Dorsolateral prefrontal cortex (tissue), 120 donors: ENCODE measurements at regions of chr6 and their contacts with region 1.

Region 1: DNA sequence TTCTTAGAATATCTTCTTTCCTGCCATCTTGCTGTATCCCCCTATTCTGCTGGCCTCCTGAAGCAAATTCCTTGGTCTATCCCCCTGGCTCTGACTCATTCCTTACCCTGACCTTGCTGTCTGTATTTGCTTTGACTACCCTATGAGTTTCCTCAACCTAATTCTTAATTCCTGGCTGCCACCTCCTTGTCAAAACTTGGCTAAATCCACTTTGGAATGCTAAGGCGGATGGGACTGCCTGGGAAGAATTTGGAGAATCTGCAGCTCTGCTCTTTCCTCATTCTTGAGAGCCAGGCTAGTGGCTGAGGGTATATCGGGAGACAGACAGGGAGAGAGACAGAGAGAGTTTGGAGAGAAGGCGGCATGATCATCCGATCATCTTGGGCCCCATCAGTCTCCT is 24.4 kb downstream of the CAP2 start:
- DNase-seq: no peak
- H3K4me3 ChIP-seq: no peak overlapping the region
- H3K27ac ChIP-seq: peak overlapping the region in 54 of 59 donors; percentile 5 to 87 (median 68)
- H3K27me3 ChIP-seq: no peaks in the 10 kb centered on the region
- CTCF ChIP-seq: no peak

Region 2: GRCh38 chr6:17367868-17368267 is 49.9 kb before region 1 on chr6:
- intact Hi-C with region 1: no loop called
- DNase-seq: no peak
- H3K4me3 ChIP-seq: no peak overlapping the region
- H3K27ac ChIP-seq: no peak overlapping the region
- H3K27me3 ChIP-seq: no peaks in the 10 kb centered on the region
- CTCF ChIP-seq: no peak

Region 3: GRCh38 chr6:17381424-17382147 is 36.2 kb before region 1 on chr6:
- intact Hi-C with region 1: loop called in 1 of 2 experiments (anchors 1 kb)
- DNase-seq: peak in 7 of 10 donors; percentile 4 to 68 (median 45)
- H3K4me3 ChIP-seq: no peak overlapping the region
- H3K27ac ChIP-seq: peak overlapping the region in 19 of 59 donors; percentile 5 to 80 (median 60)
- H3K27me3 ChIP-seq: no peaks in the 10 kb centered on the region
- CTCF ChIP-seq: no peak